Dendritic cell treated with granulocyte-macrophage colony-stimulating factor and Interleukin-4, amounts not matched to agents 40 ng/mL and 50 ng/mL, for 4 days (primary cell): ENCODE measurements at regions of chr1 and their contacts with region 1.

Region 1: GRCh38 chr1:206106328-206107167 is 10.6 kb downstream of the AVPR1B start:
- H3K4me3 Mint-ChIP-seq: no peak overlapping the region
- H3K27ac Mint-ChIP-seq: no peak overlapping the region
- H3K4me1 Mint-ChIP-seq: peaks cover 28% of the 10 kb centered on the region
- H3K27me3 Mint-ChIP-seq: peaks cover 4% of the 10 kb centered on the region

Region 2: DNA sequence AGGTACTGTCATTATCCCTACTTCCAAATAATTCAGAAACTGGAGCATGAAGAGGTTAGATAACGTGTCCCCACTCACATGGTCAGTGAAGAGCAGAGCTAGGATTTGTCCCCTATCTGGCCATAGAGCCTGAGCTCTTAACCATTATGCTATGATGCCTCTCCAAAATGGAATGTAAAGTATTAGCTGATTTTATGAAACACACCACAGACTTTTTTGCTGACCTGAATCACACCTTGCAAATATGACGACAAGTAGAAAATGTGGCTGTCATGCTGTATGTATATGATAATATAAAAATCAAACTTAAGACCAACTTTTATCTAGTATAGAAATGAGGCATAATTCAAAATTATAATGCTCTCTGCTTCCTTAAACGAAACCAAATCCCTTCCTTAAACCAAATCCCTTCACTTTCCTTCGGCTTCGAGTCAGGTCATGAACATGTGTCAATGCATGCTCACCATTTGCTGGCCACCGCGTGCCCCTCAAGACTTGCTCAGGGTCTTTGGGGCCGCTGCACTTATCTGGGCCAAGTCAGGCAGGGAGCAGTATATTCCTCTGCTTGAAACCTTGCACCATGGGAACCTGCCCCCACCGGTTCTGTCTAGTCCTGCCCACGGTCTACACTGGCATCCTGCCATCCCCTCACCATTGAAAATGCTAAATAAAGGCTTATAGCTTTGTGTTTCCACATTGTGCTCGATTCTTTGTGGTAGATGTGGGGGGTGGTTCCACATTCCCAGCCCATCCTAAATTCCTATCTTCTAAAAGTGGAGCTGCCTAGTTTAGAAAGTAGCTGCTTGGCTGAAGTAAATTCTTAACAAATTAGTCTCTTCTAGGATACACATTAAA is 880.4 kb before region 1 on chr1:
- intact Hi-C with region 1: no loop called
- H3K4me3 Mint-ChIP-seq: no peak overlapping the region
- H3K27ac Mint-ChIP-seq: no peak overlapping the region
- H3K4me1 Mint-ChIP-seq: peaks cover 43% of the 10 kb centered on the region
- H3K27me3 Mint-ChIP-seq: peaks cover 41% of the 10 kb centered on the region

Region 3: GRCh38 chr1:205791568-205792180 is 314.9 kb before region 1 on chr1:
- intact Hi-C with region 1: loop called (anchors 5 kb)
- H3K4me3 Mint-ChIP-seq: no peak overlapping the region
- H3K27ac Mint-ChIP-seq: no peak overlapping the region
- H3K4me1 Mint-ChIP-seq: peaks cover 27% of the 10 kb centered on the region
- H3K27me3 Mint-ChIP-seq: no peaks in the 10 kb centered on the region

Region 4: DNA sequence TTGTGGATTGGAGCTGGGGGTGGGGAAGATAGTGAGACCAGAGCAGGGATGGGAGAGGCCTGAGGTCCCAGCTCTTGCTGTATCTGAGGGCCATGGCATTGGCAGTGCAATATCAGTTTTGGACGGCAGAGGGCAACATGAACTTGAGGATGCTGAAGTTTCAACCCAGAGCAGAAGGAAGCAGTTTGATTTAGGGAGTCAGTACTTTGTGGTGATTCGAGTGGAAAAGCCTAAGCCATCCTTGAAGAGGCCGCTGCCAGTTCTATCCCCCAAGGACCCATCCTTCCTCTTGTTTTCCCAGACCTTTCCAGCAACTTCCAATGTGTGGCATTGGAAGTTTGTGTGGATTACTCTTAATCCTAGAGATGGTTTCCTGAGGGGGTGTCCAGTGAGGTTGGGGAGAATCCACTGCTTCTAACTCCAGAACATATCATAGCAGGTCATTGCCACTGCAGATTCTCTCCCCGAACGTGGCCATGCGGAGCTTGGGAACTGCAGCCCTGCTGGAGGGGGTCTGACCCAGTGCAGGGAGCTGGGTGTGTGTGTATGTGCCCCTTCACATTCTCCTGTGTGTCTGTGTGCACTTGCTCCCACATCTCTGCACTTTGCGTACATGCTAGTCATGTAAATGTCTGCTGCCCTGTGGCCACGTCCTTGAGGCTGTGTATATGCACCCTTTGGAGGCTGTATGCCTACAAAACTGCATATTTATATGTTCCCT is 187.4 kb before region 1 on chr1:
- intact Hi-C with region 1: loop called (anchors 5 kb)
- H3K4me3 Mint-ChIP-seq: no peak overlapping the region
- H3K27ac Mint-ChIP-seq: no peak overlapping the region
- H3K4me1 Mint-ChIP-seq: peaks cover 43% of the 10 kb centered on the region
- H3K27me3 Mint-ChIP-seq: peaks cover 12% of the 10 kb centered on the region

Region 5: GRCh38 chr1:205983925-205984725 is 122.4 kb before region 1 on chr1:
- intact Hi-C with region 1: loop called (anchors 1 kb)
- H3K4me3 Mint-ChIP-seq: no peak overlapping the region
- H3K27ac Mint-ChIP-seq: peak overlapping the region; percentile 53
- H3K4me1 Mint-ChIP-seq: peaks cover 27% of the 10 kb centered on the region
- H3K27me3 Mint-ChIP-seq: no peaks in the 10 kb centered on the region

Region 6: DNA sequence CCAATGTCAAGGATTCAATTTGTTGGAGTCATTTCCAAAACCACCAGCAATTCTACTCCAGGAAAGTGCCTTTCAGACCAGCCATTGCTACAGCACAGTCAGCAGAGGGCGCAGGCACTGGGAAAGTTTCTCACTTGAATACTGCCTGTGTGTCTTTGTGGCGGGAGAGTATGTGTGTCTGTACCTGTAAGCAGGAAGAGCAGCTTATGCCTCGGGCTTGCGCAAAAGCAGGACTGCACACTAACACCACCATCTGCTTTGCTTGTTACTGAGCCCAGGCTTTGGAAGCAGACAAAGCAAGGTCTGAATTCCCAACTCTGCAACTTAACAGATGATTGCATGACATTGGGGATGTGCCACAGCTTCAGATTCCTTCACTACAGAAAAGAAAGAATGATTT is 75.8 kb before region 1 on chr1:
- intact Hi-C with region 1: loop called (anchors 1 kb)
- H3K4me3 Mint-ChIP-seq: no peak overlapping the region
- H3K27ac Mint-ChIP-seq: no peak overlapping the region
- H3K4me1 Mint-ChIP-seq: peaks cover 47% of the 10 kb centered on the region
- H3K27me3 Mint-ChIP-seq: peaks cover 12% of the 10 kb centered on the region